GM10248 (cell line): ENCODE measurements at regions of chr4 and their contacts with region 1.

Region 1: GRCh38 chr4:15182600-15183220 is 180.4 kb downstream of the CPEB2 start:
- DNase-seq: no peak
- CTCF ChIP-seq: no peak

Region 2: DNA sequence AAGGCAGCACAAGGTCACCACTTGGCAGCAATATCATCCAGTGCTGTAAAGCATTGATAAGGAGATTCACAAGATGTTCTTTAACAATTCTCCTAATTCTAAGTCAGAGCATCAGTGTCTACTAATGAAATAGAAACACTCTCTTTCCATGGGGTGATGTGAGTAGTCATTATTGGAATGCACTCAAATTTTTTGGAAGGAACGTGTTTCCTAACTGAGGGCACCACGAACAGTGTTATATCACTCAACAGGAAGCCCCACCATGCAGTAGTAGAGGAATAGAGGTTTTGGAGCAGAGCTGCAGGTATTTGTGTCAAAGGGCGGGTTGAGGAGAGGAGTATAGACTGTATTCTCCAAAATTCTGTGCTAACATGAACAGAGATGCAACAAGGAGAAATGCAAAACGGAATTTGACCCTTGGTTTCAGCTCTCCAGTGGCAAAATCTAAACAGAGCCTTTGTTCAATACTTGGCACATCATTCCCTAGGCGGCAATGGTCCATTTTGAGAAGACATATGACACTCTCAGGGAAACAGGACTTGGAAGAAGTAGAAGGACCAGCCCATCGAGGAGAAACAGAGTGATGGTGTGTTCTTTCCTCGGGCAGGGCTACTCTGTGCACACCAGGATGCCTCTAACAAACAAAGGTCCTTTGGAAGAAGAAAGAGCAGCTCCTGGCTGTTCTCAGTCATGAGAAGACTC is 81.6 kb before region 1 on chr4:
- CTCF ChIA-PET with region 1: no interaction called
- POLR2A ChIA-PET with region 1: no interaction called
- DNase-seq: no peak
- CTCF ChIP-seq: no peak

Region 3: GRCh38 chr4:15197005-15197404 is 14.3 kb after region 1 on chr4:
- CTCF ChIA-PET with region 1: interaction called, 20 read pairs
- POLR2A ChIA-PET with region 1: no interaction called
- DNase-seq: no peak
- CTCF ChIP-seq: no peak

Region 4: GRCh38 chr4:15525054-15525453 is 342.3 kb after region 1 on chr4:
- CTCF ChIA-PET with region 1: no interaction called
- POLR2A ChIA-PET with region 1: no interaction called
- DNase-seq: no peak
- CTCF ChIP-seq: no peak